Left ventricle myocardium superior (tissue), 1 donor: ENCODE measurements at regions of chr5 and their contacts with region 1.

Region 1: GRCh38 chr5:139251281-139251687 is 42.3 kb upstream of the MATR3 start:
- DNase-seq: no peak
- ATAC-seq: no peak

Region 2: DNA sequence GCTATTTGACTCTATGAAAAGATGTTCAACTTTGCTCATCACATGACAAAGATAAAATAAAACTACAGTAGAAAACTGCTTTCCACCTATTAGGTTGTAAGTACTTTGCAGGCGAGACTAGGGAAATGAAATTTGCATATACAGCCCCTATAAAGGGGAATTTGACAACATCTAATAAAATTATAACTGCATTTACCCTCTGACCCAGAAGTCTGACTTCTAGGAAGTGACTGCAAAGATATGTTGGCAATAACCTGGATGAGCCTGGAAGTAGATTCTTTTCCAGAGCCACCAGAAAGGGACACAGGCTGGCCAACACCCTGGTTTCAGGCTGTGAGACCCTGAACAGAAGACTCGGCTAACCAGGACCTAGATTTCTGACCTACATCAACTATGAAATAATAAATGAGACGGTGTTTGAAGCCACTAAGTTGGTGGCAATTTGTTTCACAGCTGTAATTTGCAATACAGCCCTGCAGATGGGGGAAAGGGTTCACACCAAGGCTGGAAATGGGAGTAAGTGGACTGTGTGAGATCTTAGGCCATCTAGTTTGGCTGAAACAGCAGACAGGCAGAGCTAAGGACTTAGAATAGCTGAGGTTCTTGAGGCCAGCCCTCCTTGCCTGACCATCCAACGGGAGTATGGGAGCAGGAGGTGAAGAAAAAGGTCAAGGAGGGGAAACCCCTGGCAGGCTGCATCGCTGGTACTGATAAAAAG is 159.7 kb before region 1 on chr5:
- intact Hi-C with region 1: loop called (anchors 10 kb)
- DNase-seq: no peak
- ATAC-seq: peak; percentile 91